Right ventricle myocardium inferior (tissue), 1 donor: ENCODE measurements at regions of chr9 and their contacts with region 1.

Region 1: DNA sequence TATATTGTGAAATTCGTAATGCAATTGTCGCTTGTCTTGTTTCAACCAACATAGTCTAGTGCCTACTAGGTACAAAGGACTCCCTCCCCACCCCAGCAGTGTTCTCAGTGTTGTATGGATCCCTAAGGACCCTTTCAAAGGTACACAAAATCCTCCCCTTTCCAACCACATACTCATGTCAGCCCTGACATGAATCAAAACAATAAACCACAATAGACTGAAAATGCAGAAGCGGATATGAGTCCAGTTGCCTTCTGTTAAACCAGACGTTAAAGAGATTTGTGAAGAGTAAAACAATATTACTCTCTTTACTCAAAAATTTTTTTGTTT is 82.4 kb upstream of the IFNK start:
- DNase-seq: no peak
- ATAC-seq: no peak

Region 2: DNA sequence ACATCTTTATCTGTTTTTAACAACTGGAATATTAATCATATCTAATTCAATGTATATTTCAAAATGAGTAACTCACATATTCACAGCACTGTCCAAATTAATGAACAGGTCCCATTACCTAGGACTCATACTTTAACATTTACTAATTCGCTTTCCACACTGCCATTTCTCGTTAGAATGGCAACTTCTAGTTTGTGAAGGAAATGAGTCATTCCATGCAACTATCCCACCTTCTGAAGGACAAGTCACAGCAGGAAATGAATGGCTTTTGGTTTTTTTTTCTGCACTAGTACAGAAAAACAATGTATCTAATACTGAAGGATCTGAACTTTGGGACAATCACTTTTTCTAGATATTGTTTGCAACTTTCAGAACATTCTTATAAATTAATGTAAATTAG is 57.8 kb after region 1 on chr9:
- intact Hi-C with region 1: loop called (anchors 10 kb)
- DNase-seq: no peak
- ATAC-seq: no peak

Region 3: DNA sequence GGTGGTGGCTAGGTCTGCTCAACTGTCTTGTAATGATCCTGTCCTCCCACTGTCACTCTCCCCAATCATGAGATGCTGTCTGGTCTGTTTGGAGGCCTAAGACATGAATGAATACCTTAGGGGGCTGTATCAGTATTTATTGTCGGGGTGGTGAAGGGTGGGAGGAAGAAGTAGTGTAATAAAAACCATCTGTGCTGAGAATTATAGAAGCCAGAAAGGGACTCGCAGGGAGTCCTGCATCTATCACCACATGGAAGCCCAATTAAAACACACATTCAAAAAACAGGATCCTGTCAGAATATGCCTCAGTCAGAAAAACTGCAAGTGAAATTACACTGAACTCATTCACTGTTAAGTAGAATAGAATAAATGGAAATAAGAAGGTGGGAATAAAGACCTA is 1265.9 kb after region 1 on chr9:
- intact Hi-C with region 1: no loop called
- DNase-seq: no peak
- ATAC-seq: no peak